GM12878 (cell line): ENCODE measurements at regions of chr4 and their contacts with region 1.

Region 1: DNA sequence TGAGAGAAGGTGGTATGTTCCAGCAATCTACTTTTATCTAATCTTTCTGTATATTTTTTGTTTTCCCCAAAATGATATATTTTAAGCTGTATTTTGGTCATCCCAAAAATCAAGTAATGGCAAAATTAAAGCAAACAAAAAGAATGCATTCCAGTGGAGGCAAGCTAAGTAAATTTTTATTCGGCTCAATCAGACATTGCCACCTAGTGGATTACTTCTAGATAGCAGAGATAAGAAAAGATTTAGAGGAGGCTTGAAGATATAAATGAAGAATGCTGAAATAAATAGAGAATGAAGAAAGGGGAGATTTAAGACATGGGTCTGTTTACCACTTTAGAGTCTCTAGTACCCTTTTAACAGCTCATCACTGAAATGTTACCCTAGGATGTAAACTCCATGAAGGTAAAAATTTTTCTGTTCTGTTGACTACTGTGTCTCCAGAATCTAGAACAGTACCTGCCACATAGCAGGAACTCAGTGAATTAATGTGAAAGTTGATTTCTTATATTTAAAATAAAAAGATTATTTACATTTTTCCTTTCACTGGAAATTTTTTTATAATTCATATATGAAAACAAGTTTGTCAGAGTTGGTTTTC is 110.9 kb upstream of the ANK2 start:
- DNase-seq: no peak
- ATAC-seq: peak; percentile 72
- H3K4me3 ChIP-seq: no peak overlapping the region
- H3K27ac ChIP-seq: no peak overlapping the region
- H3K4me1 ChIP-seq: no peaks in the 10 kb centered on the region
- H3K27me3 ChIP-seq: no peaks in the 10 kb centered on the region
- CTCF ChIP-seq: peak; percentile 63 to 71 (median 67)
- EP300 ChIP-seq: no peak
- POLR2A ChIP-seq: no peak
- RAD21 ChIP-seq: peak; percentile 92

Region 2: DNA sequence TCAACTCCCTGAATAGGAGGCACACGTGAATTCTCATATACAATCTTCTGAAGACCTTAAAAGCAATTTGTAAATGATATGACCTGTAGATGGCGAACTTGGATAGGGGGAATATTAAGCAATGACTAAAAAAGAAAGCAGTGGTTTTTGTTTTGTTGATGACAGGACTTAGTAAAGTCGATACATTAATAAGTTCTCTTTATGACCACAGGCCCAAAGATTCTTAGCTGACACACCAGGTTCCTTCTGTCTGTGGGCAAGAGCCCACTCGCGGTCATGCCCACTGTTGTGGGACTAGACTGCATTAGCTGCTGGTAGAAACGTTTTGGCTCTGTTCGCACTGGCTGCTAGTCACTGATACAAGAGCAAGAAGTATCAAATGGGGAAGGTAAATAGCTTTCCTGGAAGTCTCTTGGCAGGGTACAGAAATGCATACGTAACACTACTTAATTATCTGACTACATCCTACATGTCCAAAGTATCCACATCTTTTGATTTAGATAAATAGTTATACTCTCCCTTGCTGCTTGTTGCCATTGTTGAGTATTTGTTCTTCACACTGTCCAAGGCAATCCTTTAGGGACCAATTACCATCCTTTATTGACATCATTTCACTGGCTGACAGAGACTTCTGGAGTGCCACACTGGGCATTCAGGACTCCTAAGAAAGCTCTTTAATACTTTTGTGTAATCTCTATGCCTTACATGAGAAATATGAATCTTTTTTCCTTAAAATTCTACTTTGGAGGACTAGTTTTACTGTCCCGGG is 610.4 kb before region 1 on chr4:
- CTCF ChIA-PET with region 1: no interaction called
- POLR2A ChIA-PET with region 1: no interaction called
- RAD21 ChIA-PET with region 1: no interaction called
- SMC1A ChIA-PET with region 1: no interaction called
- in situ Hi-C with region 1: no loop called
- intact Hi-C with region 1: loop called (anchors 10 kb)
- DNase-seq: peak; percentile 73
- ATAC-seq: peak; percentile 92
- H3K4me3 ChIP-seq: no peak overlapping the region
- H3K27ac ChIP-seq: no peak overlapping the region
- H3K4me1 ChIP-seq: peaks cover 4% of the 10 kb centered on the region
- H3K27me3 ChIP-seq: no peaks in the 10 kb centered on the region
- CTCF ChIP-seq: peak; percentile 51 to 78 (median 52); a peak in 5 of 6 replicates
- EP300 ChIP-seq: 0 out of 4 replicates have a peak, but pooled peaks of 1 of the 2 experiments have one; percentile 17
- POLR2A ChIP-seq: no peak
- RAD21 ChIP-seq: peak; percentile 90

Region 3: GRCh38 chr4:112775801-112776200 is 162.8 kb before region 1 on chr4:
- CTCF ChIA-PET with region 1: interaction called, 14 read pairs
- POLR2A ChIA-PET with region 1: no interaction called
- RAD21 ChIA-PET with region 1: interaction called, 11 read pairs
- SMC1A ChIA-PET with region 1: interaction called, 10 read pairs
- in situ Hi-C with region 1: no loop called
- intact Hi-C with region 1: no loop called
- DNase-seq: no peak
- ATAC-seq: no peak
- H3K4me3 ChIP-seq: no peak overlapping the region
- H3K27ac ChIP-seq: no peak overlapping the region
- H3K4me1 ChIP-seq: no peaks in the 10 kb centered on the region
- H3K27me3 ChIP-seq: no peaks in the 10 kb centered on the region
- CTCF ChIP-seq: no peak
- EP300 ChIP-seq: no peak
- POLR2A ChIP-seq: no peak
- RAD21 ChIP-seq: no peak

Region 4: GRCh38 chr4:112853662-112854256 is 84.8 kb before region 1 on chr4:
- CTCF ChIA-PET with region 1: interaction called, 111 read pairs
- POLR2A ChIA-PET with region 1: no interaction called
- RAD21 ChIA-PET with region 1: interaction called, 46 read pairs
- SMC1A ChIA-PET with region 1: interaction called, 83 read pairs
- in situ Hi-C with region 1: no loop called
- intact Hi-C with region 1: loop called (anchors 1 kb)
- DNase-seq: no peak
- ATAC-seq: no peak
- H3K4me3 ChIP-seq: no peak overlapping the region
- H3K27ac ChIP-seq: no peak overlapping the region
- H3K4me1 ChIP-seq: no peaks in the 10 kb centered on the region
- H3K27me3 ChIP-seq: no peaks in the 10 kb centered on the region
- CTCF ChIP-seq: peak; percentile 24 to 44 (median 40); a peak in 4 of 6 replicates
- EP300 ChIP-seq: no peak
- POLR2A ChIP-seq: no peak
- RAD21 ChIP-seq: peak; percentile 52; the same call in 1 of the 2 replicates

Region 5: DNA sequence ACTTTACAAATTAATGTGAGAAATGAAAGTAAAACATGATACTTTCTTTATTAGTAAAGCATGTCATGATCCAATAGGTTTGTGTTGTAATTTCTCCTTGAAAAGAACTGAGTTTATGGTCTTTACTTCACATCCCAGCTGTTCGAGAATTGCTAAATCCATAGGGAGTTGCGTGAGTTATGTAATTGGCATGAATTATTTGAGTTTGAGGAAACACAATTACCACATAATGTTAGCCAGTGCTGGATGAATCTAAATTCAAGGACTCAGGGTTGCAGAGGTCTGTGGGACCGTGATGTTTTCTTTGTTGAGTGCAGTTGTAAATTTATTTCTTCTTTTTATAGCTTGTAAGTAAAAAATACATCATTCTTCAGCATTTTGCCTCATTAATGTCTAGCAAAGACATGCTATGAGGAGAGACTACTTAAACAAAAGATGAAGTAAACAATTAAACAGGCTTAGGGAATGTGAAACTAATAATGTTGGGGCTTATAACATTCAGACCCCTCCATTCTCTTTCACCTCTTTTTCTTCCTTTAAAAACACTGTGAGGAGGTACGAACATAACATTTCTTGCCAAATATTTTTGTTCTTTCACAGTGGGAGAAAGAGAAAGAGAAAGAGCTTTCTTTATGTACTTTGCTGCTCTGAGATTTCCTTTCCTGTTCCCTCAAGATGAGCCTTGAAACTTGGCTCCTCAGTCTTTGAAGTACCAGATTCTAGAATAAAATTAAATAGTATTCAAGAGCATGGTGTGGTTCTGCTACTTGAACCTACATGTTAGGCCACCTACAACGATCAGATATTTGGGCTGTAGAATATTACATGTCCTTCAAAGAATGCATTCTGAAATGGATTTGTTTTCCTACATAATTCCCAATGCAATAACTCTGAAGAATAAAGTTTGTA is 48.7 kb before region 1 on chr4:
- CTCF ChIA-PET with region 1: interaction called, 20 read pairs
- POLR2A ChIA-PET with region 1: interaction called, 3 read pairs
- RAD21 ChIA-PET with region 1: interaction called, 5 read pairs
- SMC1A ChIA-PET with region 1: interaction called, 27 read pairs
- in situ Hi-C with region 1: no loop called
- intact Hi-C with region 1: no loop called
- DNase-seq: peak; percentile 23
- ATAC-seq: peak; percentile 67
- H3K4me3 ChIP-seq: peak overlapping the region; percentile 42
- H3K27ac ChIP-seq: peak overlapping the region; percentile 41; the same call in 1 of the 2 replicates
- H3K4me1 ChIP-seq: peaks cover 4% of the 10 kb centered on the region
- H3K27me3 ChIP-seq: no peaks in the 10 kb centered on the region
- CTCF ChIP-seq: no peak
- EP300 ChIP-seq: no peak
- POLR2A ChIP-seq: no peak
- RAD21 ChIP-seq: no peak

Region 6: DNA sequence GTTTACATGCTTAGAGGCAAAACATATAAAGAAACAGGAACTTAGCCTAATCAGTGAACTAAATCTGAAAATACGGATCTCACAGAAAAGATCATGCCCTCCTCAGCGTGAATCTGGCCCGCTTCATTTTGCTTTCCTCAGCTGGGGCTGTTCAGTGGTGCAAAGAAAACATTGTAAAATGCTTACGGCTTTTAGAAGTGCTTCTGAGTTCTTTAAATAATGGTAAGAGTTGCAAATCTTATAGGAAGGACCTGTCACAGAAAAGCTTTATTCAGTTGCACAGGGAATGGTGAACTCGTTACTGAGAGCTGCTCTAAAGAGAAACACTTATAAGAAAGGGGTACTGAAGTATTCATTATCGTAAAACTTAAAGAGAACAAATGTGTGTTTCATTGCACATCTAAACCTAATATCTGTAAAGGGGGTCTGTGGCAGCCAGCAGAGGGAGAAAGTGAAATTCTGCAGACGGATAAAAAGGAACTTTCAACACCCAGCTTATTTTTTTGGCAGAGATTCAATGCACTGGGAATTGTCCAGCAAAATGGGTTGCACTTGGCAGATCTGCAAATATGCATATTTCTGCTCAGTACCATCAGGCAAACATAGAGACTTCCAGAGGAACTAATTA is 28.3 kb before region 1 on chr4:
- CTCF ChIA-PET with region 1: interaction called, 17 read pairs
- POLR2A ChIA-PET with region 1: no interaction called
- RAD21 ChIA-PET with region 1: interaction called, 3 read pairs
- SMC1A ChIA-PET with region 1: interaction called, 6 read pairs
- in situ Hi-C with region 1: no loop called
- intact Hi-C with region 1: no loop called
- DNase-seq: no peak
- ATAC-seq: peak; percentile 76
- H3K4me3 ChIP-seq: peak overlapping the region; percentile 25; the same call in 1 of the 2 replicates
- H3K27ac ChIP-seq: no peak overlapping the region
- H3K4me1 ChIP-seq: no peaks in the 10 kb centered on the region
- H3K27me3 ChIP-seq: no peaks in the 10 kb centered on the region
- CTCF ChIP-seq: no peak
- EP300 ChIP-seq: no peak
- POLR2A ChIP-seq: no peak
- RAD21 ChIP-seq: no peak

Region 7: GRCh38 chr4:112927544-112927943 is 11.0 kb before region 1 on chr4:
- CTCF ChIA-PET with region 1: interaction called, 77 read pairs
- POLR2A ChIA-PET with region 1: no interaction called
- RAD21 ChIA-PET with region 1: interaction called, 5 read pairs
- SMC1A ChIA-PET with region 1: interaction called, 23 read pairs
- in situ Hi-C with region 1: no loop called
- intact Hi-C with region 1: no loop called
- DNase-seq: no peak
- ATAC-seq: no peak
- H3K4me3 ChIP-seq: no peak overlapping the region
- H3K27ac ChIP-seq: no peak overlapping the region
- H3K4me1 ChIP-seq: no peaks in the 10 kb centered on the region
- H3K27me3 ChIP-seq: no peaks in the 10 kb centered on the region
- CTCF ChIP-seq: no peak
- EP300 ChIP-seq: no peak
- POLR2A ChIP-seq: no peak
- RAD21 ChIP-seq: no peak

Region 8: GRCh38 chr4:113684534-113685091 is 746.1 kb after region 1 on chr4:
- CTCF ChIA-PET with region 1: no interaction called
- POLR2A ChIA-PET with region 1: no interaction called
- RAD21 ChIA-PET with region 1: no interaction called
- SMC1A ChIA-PET with region 1: no interaction called
- in situ Hi-C with region 1: no loop called
- intact Hi-C with region 1: no loop called
- DNase-seq: no peak
- ATAC-seq: peak; percentile 10; the same call in 2 of the 3 replicates
- H3K4me3 ChIP-seq: no peak overlapping the region
- H3K27ac ChIP-seq: no peak overlapping the region
- H3K4me1 ChIP-seq: peaks cover 32% of the 10 kb centered on the region
- H3K27me3 ChIP-seq: no peaks in the 10 kb centered on the region
- CTCF ChIP-seq: 0 out of 6 replicates have a peak, but pooled peaks of 1 of the 3 experiments have one; percentile 0
- EP300 ChIP-seq: no peak
- POLR2A ChIP-seq: no peak
- RAD21 ChIP-seq: 0 out of 2 replicates have a peak, but pooled peaks have one; percentile 4